Dorsolateral prefrontal cortex (tissue), 120 donors: ENCODE measurements at regions of chr5 and their contacts with region 1.

Region 1: DNA sequence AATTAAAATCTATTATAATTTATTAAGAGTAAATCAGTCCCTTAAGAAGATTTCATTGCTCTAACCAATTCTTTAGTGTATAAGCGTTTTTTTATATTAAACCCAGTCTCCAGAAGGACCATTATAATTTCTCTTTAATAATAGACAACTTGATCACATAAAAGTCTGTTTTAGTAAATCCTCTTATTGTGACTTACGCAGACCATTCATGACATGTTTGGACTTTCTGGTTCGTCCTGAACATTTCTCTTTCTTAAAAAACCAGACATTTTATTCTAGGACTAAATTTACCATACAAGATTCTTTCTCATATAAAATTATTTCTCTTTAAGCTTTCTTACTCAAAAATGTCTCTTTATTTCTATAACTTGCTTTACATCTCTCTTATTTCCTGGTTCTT is 196.2 kb upstream of the RAI14 start:
- DNase-seq: no peak
- H3K4me3 ChIP-seq: no peak overlapping the region
- H3K27ac ChIP-seq: no peak overlapping the region
- H3K27me3 ChIP-seq: no peaks in the 10 kb centered on the region
- CTCF ChIP-seq: no peak

Region 2: GRCh38 chr5:33997331-33997983 is 462.5 kb before region 1 on chr5:
- intact Hi-C with region 1: loop called (anchors 5 to 10 kb)
- DNase-seq: peak in 8 of 10 donors; percentile 28 to 75 (median 60)
- H3K4me3 ChIP-seq: peak overlapping the region in 3 of 59 donors; percentile 2 to 10 (median 4)
- H3K27ac ChIP-seq: peak overlapping the region in 29 of 59 donors; percentile 1 to 62 (median 36)
- H3K27me3 ChIP-seq: no peaks in the 10 kb centered on the region
- CTCF ChIP-seq: peak; percentile 50 to 82 (median 70)

Region 3: GRCh38 chr5:34436761-34437501 is 23.0 kb before region 1 on chr5:
- intact Hi-C with region 1: no loop called
- DNase-seq: no peak
- H3K4me3 ChIP-seq: no peak overlapping the region
- H3K27ac ChIP-seq: no peak overlapping the region
- H3K27me3 ChIP-seq: no peaks in the 10 kb centered on the region
- CTCF ChIP-seq: no peak

Region 4: GRCh38 chr5:34721327-34721726 is 261.4 kb after region 1 on chr5:
- intact Hi-C with region 1: no loop called
- DNase-seq: no peak
- H3K4me3 ChIP-seq: no peak overlapping the region
- H3K27ac ChIP-seq: no peak overlapping the region
- H3K27me3 ChIP-seq: no peaks in the 10 kb centered on the region
- CTCF ChIP-seq: no peak

Region 5: GRCh38 chr5:34771064-34771463 is 311.2 kb after region 1 on chr5:
- intact Hi-C with region 1: no loop called
- DNase-seq: no peak
- H3K4me3 ChIP-seq: no peak overlapping the region
- H3K27ac ChIP-seq: peak overlapping the region in 1 of 59 donors; percentile 22
- H3K27me3 ChIP-seq: no peaks in the 10 kb centered on the region
- CTCF ChIP-seq: no peak

Region 6: DNA sequence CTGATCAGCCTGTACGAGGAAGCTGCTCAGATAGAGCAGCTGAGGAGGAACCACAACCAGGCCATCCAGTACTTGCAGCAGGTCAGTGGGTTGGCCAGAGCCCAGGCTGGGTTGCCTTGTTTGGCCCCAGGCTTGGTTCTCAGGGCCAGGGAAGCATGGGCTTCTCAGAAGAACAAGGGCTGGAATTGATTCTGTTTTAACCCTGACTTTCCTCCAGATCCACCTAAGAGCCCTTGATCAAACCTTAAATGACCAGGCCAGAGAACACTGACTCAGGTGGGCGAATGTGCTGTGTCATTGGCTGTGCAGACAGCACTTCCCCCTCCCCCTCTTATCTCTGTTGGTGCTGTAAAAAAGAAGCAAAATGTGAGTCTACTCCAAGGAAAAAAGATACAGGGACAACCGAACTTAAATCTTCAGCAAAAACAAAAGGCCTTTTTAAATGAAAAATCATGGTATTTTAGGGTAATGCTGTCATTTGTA is 407.1 kb after region 1 on chr5:
- intact Hi-C with region 1: no loop called
- DNase-seq: peak in 2 of 10 donors; percentile 18 to 47
- H3K4me3 ChIP-seq: peak overlapping the region in 26 of 59 donors; percentile 9 to 62 (median 38)
- H3K27ac ChIP-seq: peak overlapping the region in 36 of 59 donors; percentile 16 to 96 (median 86)
- H3K27me3 ChIP-seq: no peaks in the 10 kb centered on the region
- CTCF ChIP-seq: no peak